ENCODE measurements at regions of chr1 and their contacts with region 1.

Region 1: DNA sequence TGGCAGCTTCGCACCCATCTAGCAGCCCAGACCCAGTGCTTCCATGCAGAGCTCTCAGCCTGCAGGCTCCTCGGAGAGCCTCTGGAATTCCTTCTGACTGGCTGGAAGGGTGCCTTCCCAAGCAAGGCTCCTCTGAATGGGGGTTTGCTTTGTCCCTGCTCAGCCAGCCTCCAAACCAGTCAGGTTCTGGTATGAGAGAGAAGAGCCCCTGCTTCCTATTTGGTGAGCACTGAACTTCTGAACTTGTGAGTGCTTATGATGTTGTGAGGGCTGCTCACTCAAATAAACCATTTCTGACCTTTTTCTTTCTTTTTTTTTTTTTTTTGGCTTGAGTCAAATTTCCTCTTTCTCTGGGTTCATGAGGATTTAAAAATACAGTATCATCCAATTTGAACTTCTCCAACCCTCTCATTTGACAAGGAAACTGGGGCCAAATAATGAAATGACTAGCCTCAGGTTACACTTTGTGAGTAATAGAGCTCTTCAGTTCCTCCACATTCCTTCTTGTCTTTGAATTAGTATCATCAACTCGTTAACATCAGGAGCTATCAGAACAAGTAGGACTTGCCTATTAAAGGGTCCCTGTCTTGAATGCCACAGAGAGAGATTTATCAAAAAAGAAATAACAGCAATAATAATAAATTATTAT is 39.6 kb downstream of the GFI1 start:
- DNase-seq: no peak
- H3K4me3 ChIP-seq: no peak overlapping the region
- H3K27ac ChIP-seq: no peak overlapping the region
- H3K27me3 ChIP-seq: no peaks in the 10 kb centered on the region
- CTCF ChIP-seq: no peak

Region 2: DNA sequence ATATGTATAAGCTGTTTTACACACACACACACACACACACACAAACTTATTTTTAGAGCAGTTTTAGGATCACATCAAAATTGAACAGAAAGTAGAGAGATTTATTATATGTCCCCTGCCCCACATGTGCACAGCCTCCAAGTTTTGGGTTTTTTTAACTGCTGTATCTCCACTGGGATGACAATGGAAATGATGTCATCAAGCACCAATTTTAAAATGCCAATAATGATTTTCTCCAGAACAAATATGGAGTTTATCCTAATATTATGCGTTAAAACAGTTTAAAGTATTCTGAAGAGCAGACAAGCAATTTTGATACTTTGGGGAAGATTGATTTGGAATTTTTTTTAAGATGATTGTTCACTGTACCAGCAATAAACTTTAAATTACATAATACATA is 17.1 kb before region 1 on chr1:
- CTCF ChIA-PET with region 1: no interaction called
- POLR2A ChIA-PET with region 1: interaction called, 10 read pairs
- DNase-seq: no peak
- H3K4me3 ChIP-seq: no peak overlapping the region
- H3K27ac ChIP-seq: no peak overlapping the region
- H3K27me3 ChIP-seq: no peaks in the 10 kb centered on the region
- CTCF ChIP-seq: no peak

Region 3: DNA sequence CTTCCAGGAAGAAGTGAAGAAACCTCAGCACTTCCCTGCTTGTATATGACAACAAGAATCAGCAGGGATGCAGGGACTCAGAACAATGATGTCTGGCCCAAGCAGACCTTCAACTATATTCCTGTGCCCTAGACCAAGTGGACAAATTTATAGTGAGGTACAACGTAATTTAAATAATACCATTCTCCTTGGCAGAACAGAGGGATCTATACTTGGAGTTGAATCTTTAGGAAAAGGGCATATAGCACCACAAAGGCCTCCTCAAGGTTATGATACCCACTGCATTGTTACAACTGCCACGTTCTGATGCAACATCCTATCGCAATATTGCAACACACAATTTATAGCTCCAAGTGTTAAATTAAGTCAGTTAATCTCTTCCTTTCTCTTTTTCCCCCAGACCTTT is 68.6 kb after region 1 on chr1:
- CTCF ChIA-PET with region 1: no interaction called
- POLR2A ChIA-PET with region 1: no interaction called
- DNase-seq: no peak
- H3K4me3 ChIP-seq: no peak overlapping the region
- H3K27ac ChIP-seq: no peak overlapping the region
- H3K27me3 ChIP-seq: no peaks in the 10 kb centered on the region
- CTCF ChIP-seq: no peak

Measured in AG04450 (cell line).